ENCODE measurements at regions of chr3 and their contacts with region 1.

Region 1: GRCh38 chr3:48400824-48401433 is 28.9 kb downstream of the FBXW12 start:
- DNase-seq: peak; percentile 50
- ATAC-seq: peak; percentile 63
- H3K4me3 Mint-ChIP-seq: no peak overlapping the region
- H3K27ac Mint-ChIP-seq: peak overlapping the region; percentile 88
- H3K4me1 Mint-ChIP-seq: peaks cover 11% of the 10 kb centered on the region
- H3K27me3 Mint-ChIP-seq: peaks cover 2% of the 10 kb centered on the region
- CTCF ChIP-seq: peak; percentile 68

Region 2: DNA sequence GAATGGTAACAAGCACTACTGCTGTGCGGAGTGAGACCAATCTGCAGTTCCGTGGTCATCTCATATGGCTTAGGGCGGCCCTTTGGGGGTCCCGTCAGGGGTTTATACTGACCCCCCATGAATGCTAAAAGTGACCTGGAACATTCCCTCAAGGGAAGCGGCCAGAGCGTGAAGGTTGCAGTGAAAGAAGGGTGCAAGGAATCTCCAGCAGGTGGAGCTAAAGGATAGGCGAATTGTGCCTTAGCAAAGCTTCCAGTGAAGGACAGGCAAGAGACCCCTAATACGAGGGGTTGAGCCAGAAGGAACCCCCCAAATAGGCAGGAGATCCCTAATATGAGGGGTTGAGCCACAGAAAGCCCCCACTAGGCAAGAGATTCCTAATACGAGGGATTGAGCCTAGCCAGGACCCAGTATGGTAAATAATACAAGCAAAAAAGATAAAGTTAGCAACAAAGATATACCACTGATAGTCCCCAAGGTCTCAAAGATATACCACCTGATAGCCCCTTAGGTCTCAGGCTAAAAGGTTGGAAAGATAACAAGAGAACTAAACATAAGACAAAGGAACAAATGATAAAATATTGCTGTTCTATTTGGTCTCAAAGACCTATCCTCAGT is 127.2 kb before region 1 on chr3:
- CTCF ChIA-PET with region 1: interaction called, 29 read pairs
- POLR2A ChIA-PET with region 1: no interaction called
- DNase-seq: peak; percentile 65
- ATAC-seq: peak; percentile 51
- H3K4me3 Mint-ChIP-seq: no peak overlapping the region
- H3K27ac Mint-ChIP-seq: no peak overlapping the region
- H3K4me1 Mint-ChIP-seq: peaks cover 42% of the 10 kb centered on the region
- H3K27me3 Mint-ChIP-seq: no peaks in the 10 kb centered on the region
- CTCF ChIP-seq: peak; percentile 55

Region 3: DNA sequence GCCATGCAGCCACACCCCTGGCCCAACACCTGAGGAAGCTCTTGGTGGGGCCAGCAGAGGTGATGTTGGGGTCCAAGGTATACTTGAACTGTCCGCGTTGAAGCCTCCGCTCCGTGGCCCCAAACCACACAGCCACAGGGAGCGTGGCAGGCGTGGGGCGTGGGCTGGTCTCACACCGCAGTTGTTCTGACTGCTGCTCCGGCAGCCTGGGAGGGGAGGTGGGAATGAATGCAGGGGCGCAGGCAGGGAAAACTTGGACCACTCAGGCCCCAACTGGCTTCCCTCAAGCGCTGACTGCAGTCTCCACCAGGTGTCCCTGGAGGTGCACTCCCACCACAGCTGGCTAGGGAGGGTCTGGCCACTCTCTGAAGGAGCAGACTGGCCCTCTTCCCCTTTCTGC is 14.6 kb after region 1 on chr3:
- CTCF ChIA-PET with region 1: interaction called, 15 read pairs
- POLR2A ChIA-PET with region 1: no interaction called
- DNase-seq: no peak
- ATAC-seq: peak; percentile 65
- H3K4me3 Mint-ChIP-seq: no peak overlapping the region
- H3K27ac Mint-ChIP-seq: no peak overlapping the region
- H3K4me1 Mint-ChIP-seq: no peaks in the 10 kb centered on the region
- H3K27me3 Mint-ChIP-seq: no peaks in the 10 kb centered on the region
- CTCF ChIP-seq: no peak

Region 4: DNA sequence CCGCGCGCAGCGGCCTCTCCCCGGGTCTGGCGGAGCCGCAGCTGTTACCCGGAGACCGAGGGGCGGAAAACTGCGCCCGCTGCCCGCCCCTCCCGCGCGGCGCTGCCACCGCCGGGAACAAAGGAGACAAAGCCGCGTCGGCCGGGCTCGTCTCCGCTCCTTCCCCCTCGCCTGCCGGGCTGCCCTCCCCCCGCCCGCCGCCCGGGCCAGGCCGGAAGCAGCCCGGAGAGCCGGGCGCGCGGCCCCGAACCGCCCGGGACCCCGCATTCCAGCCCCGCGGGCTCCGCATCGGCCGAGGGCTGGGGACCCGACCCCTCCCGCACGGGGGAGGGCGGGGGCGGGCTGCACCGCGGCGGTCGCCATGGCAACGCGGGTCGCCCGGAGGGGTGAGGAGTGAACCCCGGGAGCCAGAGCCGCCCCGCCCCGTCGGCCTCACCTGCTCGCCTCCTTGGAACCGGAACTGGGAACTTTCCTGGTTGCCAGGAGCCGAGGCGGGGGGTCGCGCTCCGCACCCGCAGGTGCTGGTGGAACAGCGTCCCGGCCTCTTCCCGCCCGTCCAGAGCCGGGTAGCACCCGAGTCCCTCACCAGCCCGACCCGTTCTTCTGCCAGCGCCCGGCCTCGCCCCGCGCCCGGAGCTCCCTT is 28.5 kb after region 1 on chr3:
- CTCF ChIA-PET with region 1: interaction called, 142 read pairs
- POLR2A ChIA-PET with region 1: interaction called, 4 read pairs
- DNase-seq: peak; percentile 86
- ATAC-seq: peak; percentile 16
- H3K4me3 Mint-ChIP-seq: peak overlapping the region; percentile 87
- H3K27ac Mint-ChIP-seq: peak overlapping the region; percentile 87
- H3K4me1 Mint-ChIP-seq: peaks cover 59% of the 10 kb centered on the region
- H3K27me3 Mint-ChIP-seq: no peaks in the 10 kb centered on the region
- CTCF ChIP-seq: no peak

Region 5: GRCh38 chr3:48472915-48473616 is 72.1 kb after region 1 on chr3:
- CTCF ChIA-PET with region 1: interaction called, 25 read pairs
- POLR2A ChIA-PET with region 1: no interaction called
- DNase-seq: peak; percentile 96
- ATAC-seq: peak; percentile 82
- H3K4me3 Mint-ChIP-seq: peak overlapping the region; percentile 91
- H3K27ac Mint-ChIP-seq: peak overlapping the region; percentile 99
- H3K4me1 Mint-ChIP-seq: peaks cover 30% of the 10 kb centered on the region
- H3K27me3 Mint-ChIP-seq: no peaks in the 10 kb centered on the region; the same call in none of the 2 replicates
- CTCF ChIP-seq: peak; percentile 45; the same call in 1 of the 2 replicates

Region 6: GRCh38 chr3:48548729-48549705 is 148.1 kb after region 1 on chr3:
- CTCF ChIA-PET with region 1: interaction called, 33 read pairs
- POLR2A ChIA-PET with region 1: no interaction called
- DNase-seq: peak; percentile 91
- ATAC-seq: peak; percentile 97
- H3K4me3 Mint-ChIP-seq: no peak overlapping the region
- H3K27ac Mint-ChIP-seq: peak overlapping the region; percentile 87
- H3K4me1 Mint-ChIP-seq: peaks cover 16% of the 10 kb centered on the region
- H3K27me3 Mint-ChIP-seq: no peaks in the 10 kb centered on the region
- CTCF ChIP-seq: peak; percentile 76

Region 7: GRCh38 chr3:48885753-48886152 is 484.8 kb after region 1 on chr3:
- CTCF ChIA-PET with region 1: no interaction called
- POLR2A ChIA-PET with region 1: no interaction called
- DNase-seq: no peak
- ATAC-seq: no peak
- H3K4me3 Mint-ChIP-seq: no peak overlapping the region
- H3K27ac Mint-ChIP-seq: peak overlapping the region; percentile 74; the same call in 1 of the 2 replicates
- H3K4me1 Mint-ChIP-seq: no peaks in the 10 kb centered on the region
- H3K27me3 Mint-ChIP-seq: no peaks in the 10 kb centered on the region
- CTCF ChIP-seq: no peak

Measured in WTC11 (cell line).